CD4-positive, alpha-beta memory T cell (primary cell): ENCODE measurements at regions of chr5 and their contacts with region 1.

Region 1: DNA sequence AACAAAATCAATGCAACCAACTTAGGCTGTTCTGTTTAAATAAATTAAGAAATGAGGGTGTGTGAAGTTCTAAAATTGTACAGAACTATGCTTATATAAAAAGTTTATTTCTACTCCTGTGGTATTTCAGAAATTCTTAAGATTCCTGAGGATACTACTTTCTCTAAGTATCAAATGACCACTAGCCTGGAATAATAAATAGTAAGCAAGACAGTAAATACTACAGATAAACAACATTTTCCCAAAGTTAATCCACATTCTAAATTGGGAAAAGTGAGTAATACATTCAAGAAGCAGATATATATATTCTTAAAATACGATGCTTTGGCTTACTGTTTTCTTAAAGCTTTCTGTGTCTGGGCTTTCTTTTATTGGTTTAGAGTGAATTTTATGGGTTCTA is 29.5 kb downstream of the CCNH start:
- DNase-seq: no peak
- H3K4me3 ChIP-seq: no peak overlapping the region
- H3K4me3 Mint-ChIP-seq: no peak overlapping the region
- H3K27ac ChIP-seq: no peak overlapping the region
- H3K27ac Mint-ChIP-seq: no peak overlapping the region
- H3K4me1 ChIP-seq: no peaks in the 10 kb centered on the region
- H3K4me1 Mint-ChIP-seq: peaks cover 4 to 18% (median 12%) of the 10 kb centered on the region in 4 donors
- H3K27me3 ChIP-seq: no peaks in the 10 kb centered on the region
- H3K27me3 Mint-ChIP-seq: no peaks in the 10 kb centered on the region

Region 2: DNA sequence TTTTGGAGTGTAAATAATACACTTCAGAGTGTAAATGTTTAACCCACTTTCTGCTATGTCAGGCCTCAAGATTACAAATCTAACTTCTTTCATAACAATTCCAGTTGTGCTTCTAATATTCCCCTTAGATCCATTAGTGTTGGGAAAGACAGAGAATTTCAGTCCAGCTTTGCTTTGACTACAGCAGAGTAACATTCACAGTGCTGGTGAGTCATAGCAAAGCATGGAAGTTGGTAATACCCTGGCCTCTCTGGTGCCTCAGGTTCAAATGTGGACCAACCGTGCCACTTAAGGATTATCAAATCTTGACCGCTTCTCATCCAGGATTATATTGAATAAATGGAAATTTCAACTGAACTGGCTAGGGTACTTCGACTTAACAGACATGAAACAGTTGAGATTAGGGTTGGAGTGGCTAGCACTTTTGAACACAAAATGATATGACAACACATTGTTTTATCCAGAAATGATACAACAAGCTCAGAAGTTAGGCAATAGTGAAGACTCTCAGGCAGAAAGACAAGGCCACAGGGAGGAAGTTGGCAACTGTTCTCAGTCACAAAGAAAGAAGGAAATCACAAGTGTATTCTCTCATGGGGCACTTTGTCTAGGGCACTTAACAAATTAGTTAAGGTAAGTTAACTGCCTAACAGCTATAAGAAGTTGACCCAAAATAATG is 139.9 kb before region 1 on chr5:
- CTCF ChIA-PET with region 1: no interaction called
- POLR2A ChIA-PET with region 1: no interaction called
- intact Hi-C with region 1: no loop called
- DNase-seq: no peak
- H3K4me3 ChIP-seq: no peak overlapping the region
- H3K4me3 Mint-ChIP-seq: no peak overlapping the region
- H3K27ac ChIP-seq: no peak overlapping the region
- H3K27ac Mint-ChIP-seq: no peak overlapping the region
- H3K4me1 ChIP-seq: no peaks in the 10 kb centered on the region
- H3K4me1 Mint-ChIP-seq: peaks cover 0 to 2% (median 0%) of the 10 kb centered on the region in 4 donors
- H3K27me3 ChIP-seq: no peaks in the 10 kb centered on the region
- H3K27me3 Mint-ChIP-seq: no peaks in the 10 kb centered on the region

Region 3: DNA sequence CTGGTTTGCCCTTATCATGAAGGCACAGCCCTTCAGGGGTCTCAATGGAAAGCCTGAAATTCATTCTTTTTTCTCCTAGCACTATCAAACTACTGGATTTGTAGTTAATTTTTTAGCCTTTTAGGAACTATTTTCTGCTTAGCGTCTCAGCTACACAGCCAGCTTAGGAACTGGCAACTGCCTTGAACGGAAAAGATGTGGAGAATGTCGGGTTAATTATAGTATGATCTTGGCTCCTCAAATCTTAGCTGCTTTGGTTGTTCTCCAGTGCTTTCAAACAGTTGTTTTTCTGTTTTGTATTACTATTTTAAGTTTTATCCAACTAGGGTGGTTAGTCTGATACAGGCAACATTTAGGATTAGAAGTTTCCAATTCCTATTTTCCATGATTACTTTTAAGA is 14.6 kb before region 1 on chr5:
- CTCF ChIA-PET with region 1: no interaction called
- POLR2A ChIA-PET with region 1: no interaction called
- intact Hi-C with region 1: loop called (anchors 1 kb)
- DNase-seq: no peak
- H3K4me3 ChIP-seq: no peak overlapping the region
- H3K4me3 Mint-ChIP-seq: no peak overlapping the region
- H3K27ac ChIP-seq: no peak overlapping the region
- H3K27ac Mint-ChIP-seq: peak overlapping the region in 3 of 7 donors; percentile 74 to 81 (median 75)
- H3K4me1 ChIP-seq: no peaks in the 10 kb centered on the region
- H3K4me1 Mint-ChIP-seq: peaks cover 4 to 21% (median 11%) of the 10 kb centered on the region in 4 donors
- H3K27me3 ChIP-seq: no peaks in the 10 kb centered on the region
- H3K27me3 Mint-ChIP-seq: no peaks in the 10 kb centered on the region

Region 4: GRCh38 chr5:88251048-88251711 is 868.0 kb after region 1 on chr5:
- CTCF ChIA-PET with region 1: no interaction called
- POLR2A ChIA-PET with region 1: no interaction called
- intact Hi-C with region 1: no loop called
- DNase-seq: peak in 4 of 5 donors; percentile 1 to 64 (median 14)
- H3K4me3 ChIP-seq: no peak overlapping the region
- H3K4me3 Mint-ChIP-seq: peak overlapping the region in 4 of 8 donors; percentile 6 to 51 (median 34)
- H3K27ac ChIP-seq: no peak overlapping the region
- H3K27ac Mint-ChIP-seq: peak overlapping the region in 5 of 7 donors; percentile 15 to 72 (median 50)
- H3K4me1 ChIP-seq: peaks cover 21% of the 10 kb centered on the region
- H3K4me1 Mint-ChIP-seq: peaks cover 36 to 77% (median 56%) of the 10 kb centered on the region in 4 donors
- H3K27me3 ChIP-seq: no peaks in the 10 kb centered on the region
- H3K27me3 Mint-ChIP-seq: no peaks in the 10 kb centered on the region